ENCODE measurements at regions of chr19 and their contacts with region 1.

Region 1: DNA sequence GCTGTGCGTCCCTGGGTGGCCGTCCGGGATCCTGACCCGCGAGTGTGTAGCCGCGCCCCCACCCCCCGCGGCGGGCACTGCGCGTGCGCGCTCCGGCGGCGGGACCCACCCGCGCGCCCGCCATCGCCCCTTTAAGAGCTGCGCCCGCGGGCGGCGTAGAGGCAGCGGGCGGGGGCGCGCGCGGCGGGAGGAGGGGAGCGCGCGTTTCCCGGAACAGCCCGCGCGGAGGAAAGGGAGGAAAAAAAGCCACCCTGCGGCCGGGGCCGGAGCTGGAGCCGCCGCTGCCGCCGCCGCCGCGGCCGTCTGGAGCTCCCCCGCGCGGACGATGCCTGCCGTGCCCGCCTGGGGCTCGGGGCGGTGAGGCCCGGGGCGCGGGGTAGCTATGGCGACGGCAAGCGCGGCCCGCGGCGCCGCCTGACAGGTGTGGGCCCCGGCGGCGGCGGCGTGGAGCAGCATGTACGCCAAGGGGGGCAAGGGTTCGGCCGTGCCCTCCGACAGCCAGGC is at the start of gene SSBP4:
- DNase-seq: peak; percentile 76 to 83 (median 81)
- H3K4me3 ChIP-seq: peak within 1 kb of the TSS; percentile 29 to 64
- H3K4me3 Mint-ChIP-seq: peak within 1 kb of the TSS; percentile 92 to 96 (median 94)
- H3K27ac ChIP-seq: peak within 1 kb of the TSS; percentile 70
- H3K27ac Mint-ChIP-seq: peak within 1 kb of the TSS; percentile 96 to 98 (median 97)
- H3K4me1 ChIP-seq: peaks cover 87% of the 10 kb centered on the region
- H3K4me1 Mint-ChIP-seq: peaks cover 62 to 90% (median 76%) of the 10 kb centered on the region in 4 donors
- H3K27me3 ChIP-seq: no peaks in the 10 kb centered on the region
- H3K27me3 Mint-ChIP-seq: peaks cover 2 to 5% of the 10 kb centered on the region in 2 donors
- total RNA-seq, gene SSBP4: 71.3 to 73.4 TPM

Region 2: GRCh38 chr19:18097217-18097992 is 321.8 kb before region 1 on chr19 and contains the start of gene MAST3:
- CTCF ChIA-PET with region 1: no interaction called
- POLR2A ChIA-PET with region 1: no interaction called
- intact Hi-C with region 1: loop called (anchors 10 kb)
- DNase-seq: peak; percentile 87 to 93 (median 93)
- H3K4me3 ChIP-seq: peak within 1 kb of the TSS; percentile 38 to 70
- H3K4me3 Mint-ChIP-seq: peak within 1 kb of the TSS; percentile 87 to 95 (median 89)
- H3K27ac ChIP-seq: peak within 1 kb of the TSS; percentile 68
- H3K27ac Mint-ChIP-seq: peak within 1 kb of the TSS; percentile 85 to 93 (median 89)
- H3K4me1 ChIP-seq: peaks cover 36% of the 10 kb centered on the region
- H3K4me1 Mint-ChIP-seq: peaks cover 22 to 50% (median 38%) of the 10 kb centered on the region in 4 donors
- H3K27me3 ChIP-seq: no peaks in the 10 kb centered on the region
- H3K27me3 Mint-ChIP-seq: no peaks in the 10 kb centered on the region
- total RNA-seq, gene MAST3: 51.6 to 53.9 TPM

Region 3: DNA sequence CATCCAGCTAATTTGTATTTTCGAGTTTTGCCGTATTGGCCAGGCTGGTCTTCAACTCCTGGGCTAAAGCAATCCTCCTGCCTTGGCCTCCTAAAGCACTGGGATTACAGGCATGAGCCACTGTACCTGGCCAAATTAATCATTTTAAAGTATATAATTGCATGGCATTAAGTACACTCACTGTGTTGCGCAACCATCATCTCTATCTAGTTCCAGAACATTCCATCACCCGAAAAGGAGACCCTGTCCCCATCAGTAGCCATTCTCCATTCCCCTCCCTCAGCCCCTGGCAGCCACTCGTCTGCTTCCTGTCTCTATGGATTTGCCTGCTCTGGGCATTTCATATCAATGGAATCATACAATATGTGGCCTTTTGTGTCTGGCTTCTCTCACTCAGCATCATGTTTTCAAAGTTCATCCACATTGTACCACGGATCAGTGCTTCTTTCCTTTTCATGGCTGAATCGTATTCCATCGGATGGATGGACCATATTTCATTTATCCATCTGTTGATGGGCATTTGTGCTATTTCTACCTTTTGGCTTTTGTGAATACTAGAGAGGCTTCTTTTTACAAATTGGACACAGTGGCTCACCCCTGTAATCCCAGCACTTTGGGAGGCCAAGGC is 65.8 kb before region 1 on chr19:
- CTCF ChIA-PET with region 1: no interaction called
- POLR2A ChIA-PET with region 1: no interaction called
- intact Hi-C with region 1: no loop called
- DNase-seq: no peak
- H3K4me3 ChIP-seq: no peak overlapping the region
- H3K4me3 Mint-ChIP-seq: no peak overlapping the region
- H3K27ac ChIP-seq: no peak overlapping the region
- H3K27ac Mint-ChIP-seq: no peak overlapping the region
- H3K4me1 ChIP-seq: no peaks in the 10 kb centered on the region
- H3K4me1 Mint-ChIP-seq: peaks cover 0 to 4% (median 0%) of the 10 kb centered on the region in 4 donors
- H3K27me3 ChIP-seq: no peaks in the 10 kb centered on the region
- H3K27me3 Mint-ChIP-seq: no peaks in the 10 kb centered on the region

Region 4: DNA sequence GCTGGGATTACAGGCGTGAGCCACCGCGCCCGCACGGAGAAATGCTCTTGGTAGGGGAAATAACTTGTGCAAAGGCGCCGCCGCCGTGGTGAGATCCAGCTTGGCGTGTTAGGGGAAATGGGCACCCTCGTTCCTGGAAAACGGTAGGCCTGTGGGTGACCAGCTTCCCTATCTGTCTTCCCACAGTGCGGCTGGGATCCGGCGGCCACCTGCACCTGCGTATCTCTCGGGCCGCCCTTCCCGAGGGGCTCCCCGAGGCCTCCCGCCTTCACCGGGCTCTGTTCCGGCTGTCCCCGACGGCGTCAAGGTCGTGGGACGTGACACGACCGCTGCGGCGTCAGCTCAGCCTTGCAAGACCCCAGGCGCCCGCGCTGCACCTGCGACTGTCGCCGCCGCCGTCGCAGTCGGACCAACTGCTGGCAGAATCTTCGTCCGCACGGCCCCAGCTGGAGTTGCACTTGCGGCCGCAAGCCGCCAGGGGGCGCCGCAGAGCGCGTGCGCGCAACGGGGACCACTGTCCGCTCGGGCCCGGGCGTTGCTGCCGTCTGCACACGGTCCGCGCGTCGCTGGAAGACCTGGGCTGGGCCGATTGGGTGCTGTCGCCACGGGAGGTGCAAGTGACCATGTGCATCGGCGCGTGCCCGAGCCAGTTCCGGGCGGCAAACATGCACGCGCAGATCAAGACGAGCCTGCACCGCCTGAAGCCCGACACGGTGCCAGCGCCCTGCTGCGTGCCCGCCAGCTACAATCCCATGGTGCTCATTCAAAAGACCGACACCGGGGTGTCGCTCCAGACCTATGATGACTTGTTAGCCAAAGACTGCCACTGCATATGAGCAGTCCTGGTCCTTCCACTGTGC is 30.9 kb before region 1 on chr19:
- CTCF ChIA-PET with region 1: interaction called, 92 read pairs
- POLR2A ChIA-PET with region 1: interaction called, 6 read pairs
- intact Hi-C with region 1: no loop called
- DNase-seq: peak; percentile 61 to 73 (median 67)
- H3K4me3 ChIP-seq: peak overlapping the region in 1 of 2 donors; percentile 31
- H3K4me3 Mint-ChIP-seq: peak overlapping the region; percentile 64 to 80 (median 76)
- H3K27ac ChIP-seq: no peak overlapping the region
- H3K27ac Mint-ChIP-seq: peak overlapping the region in 1 of 7 donors; percentile 12
- H3K4me1 ChIP-seq: peaks cover 7% of the 10 kb centered on the region
- H3K4me1 Mint-ChIP-seq: peaks cover 2 to 14% (median 6%) of the 10 kb centered on the region in 4 donors
- H3K27me3 ChIP-seq: peaks cover 21% of the 10 kb centered on the region
- H3K27me3 Mint-ChIP-seq: peaks cover 8 to 10% of the 10 kb centered on the region in 2 donors

Region 5: DNA sequence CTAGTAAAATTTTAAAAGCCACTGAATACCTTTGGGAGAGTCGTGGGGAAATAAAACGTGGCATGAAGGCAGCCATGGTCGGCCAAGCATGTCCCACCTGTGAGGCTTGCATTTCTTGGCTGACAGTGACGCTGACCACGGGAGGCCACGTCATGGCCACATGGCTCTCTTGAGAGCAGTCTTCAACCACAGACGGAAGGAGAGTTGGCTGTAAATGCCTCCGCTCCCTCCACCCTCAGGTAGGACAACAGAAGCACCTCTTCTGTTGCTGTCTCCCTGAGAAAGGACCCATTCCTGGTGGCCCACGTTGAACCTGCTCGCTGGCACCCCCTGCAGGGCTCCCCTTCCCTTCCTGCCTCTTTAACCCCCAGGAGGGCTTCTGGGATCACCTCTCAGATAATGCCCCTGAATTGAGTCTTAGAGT is 11.2 kb before region 1 on chr19:
- CTCF ChIA-PET with region 1: interaction called, 21 read pairs
- POLR2A ChIA-PET with region 1: interaction called, 16 read pairs
- intact Hi-C with region 1: no loop called
- DNase-seq: no peak
- H3K4me3 ChIP-seq: no peak overlapping the region
- H3K4me3 Mint-ChIP-seq: no peak overlapping the region
- H3K27ac ChIP-seq: no peak overlapping the region
- H3K27ac Mint-ChIP-seq: no peak overlapping the region
- H3K4me1 ChIP-seq: no peaks in the 10 kb centered on the region
- H3K4me1 Mint-ChIP-seq: peaks cover 3 to 7% (median 4%) of the 10 kb centered on the region in 4 donors
- H3K27me3 ChIP-seq: no peaks in the 10 kb centered on the region
- H3K27me3 Mint-ChIP-seq: peaks cover 0 to 2% of the 10 kb centered on the region in 2 donors

Region 6: GRCh38 chr19:18436671-18437490 is 17.6 kb after region 1 on chr19:
- CTCF ChIA-PET with region 1: interaction called, 4 read pairs
- POLR2A ChIA-PET with region 1: interaction called, 238 read pairs
- intact Hi-C with region 1: loop called (anchors 2 kb)
- DNase-seq: peak; percentile 74 to 85 (median 77)
- H3K4me3 ChIP-seq: peak overlapping the region in 1 of 2 donors; percentile 55
- H3K4me3 Mint-ChIP-seq: peak overlapping the region; percentile 74 to 87 (median 83)
- H3K27ac ChIP-seq: peak overlapping the region; percentile 26
- H3K27ac Mint-ChIP-seq: peak overlapping the region; percentile 70 to 91 (median 78)
- H3K4me1 ChIP-seq: peaks cover 20% of the 10 kb centered on the region
- H3K4me1 Mint-ChIP-seq: peaks cover 12 to 51% (median 25%) of the 10 kb centered on the region in 4 donors
- H3K27me3 ChIP-seq: no peaks in the 10 kb centered on the region
- H3K27me3 Mint-ChIP-seq: no peaks in the 10 kb centered on the region

Region 7: GRCh38 chr19:18483119-18483890 is 64.1 kb after region 1 on chr19:
- CTCF ChIA-PET with region 1: no interaction called
- POLR2A ChIA-PET with region 1: no interaction called
- intact Hi-C with region 1: no loop called
- DNase-seq: no peak
- H3K4me3 ChIP-seq: no peak overlapping the region
- H3K4me3 Mint-ChIP-seq: peak overlapping the region in 1 of 8 donors; percentile 10
- H3K27ac ChIP-seq: no peak overlapping the region
- H3K27ac Mint-ChIP-seq: peak overlapping the region; percentile 22 to 88 (median 49)
- H3K4me1 ChIP-seq: peaks cover 85% of the 10 kb centered on the region
- H3K4me1 Mint-ChIP-seq: peaks cover 40 to 97% (median 73%) of the 10 kb centered on the region in 4 donors
- H3K27me3 ChIP-seq: no peaks in the 10 kb centered on the region
- H3K27me3 Mint-ChIP-seq: no peaks in the 10 kb centered on the region